Posterior cingulate gyrus (tissue), 11 donors: ENCODE measurements at regions of chr5 and their contacts with region 1.

Region 1: DNA sequence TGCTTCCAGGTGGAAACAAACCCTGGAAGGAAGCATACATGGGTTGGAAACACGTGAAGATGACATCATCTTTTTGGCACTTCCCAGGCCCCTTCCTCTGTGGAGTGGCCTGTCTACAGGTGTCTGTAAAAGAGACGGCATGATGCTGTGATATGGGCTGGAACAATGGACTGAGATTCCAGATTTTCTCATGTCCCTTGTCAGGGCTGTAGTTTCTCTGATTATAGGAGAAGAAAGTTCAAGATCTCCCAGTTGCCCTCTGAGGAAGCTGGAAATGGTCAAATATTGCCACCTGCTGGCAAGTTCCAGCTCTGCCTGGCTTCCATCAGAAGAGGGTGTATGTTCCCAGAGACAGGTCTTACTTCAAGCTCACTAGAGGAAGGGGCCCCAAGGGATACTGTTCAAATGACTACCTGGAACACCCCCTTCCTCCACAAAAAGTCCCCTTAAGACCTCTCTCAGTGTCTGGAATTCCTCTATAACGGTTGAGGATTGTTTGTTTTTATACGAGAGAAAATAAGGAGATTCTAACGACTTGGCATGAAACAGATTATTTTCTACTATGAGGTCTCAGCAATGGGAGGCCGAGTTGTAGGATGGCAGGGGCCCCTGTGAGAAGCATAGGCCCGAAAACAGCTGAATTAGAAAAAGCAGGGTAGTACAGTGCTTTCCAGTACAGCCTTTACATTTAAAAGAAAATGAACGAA is 7.3 kb upstream of the ANXA6 start:
- DNase-seq: peak; percentile 45 to 96 (median 80)

Region 2: DNA sequence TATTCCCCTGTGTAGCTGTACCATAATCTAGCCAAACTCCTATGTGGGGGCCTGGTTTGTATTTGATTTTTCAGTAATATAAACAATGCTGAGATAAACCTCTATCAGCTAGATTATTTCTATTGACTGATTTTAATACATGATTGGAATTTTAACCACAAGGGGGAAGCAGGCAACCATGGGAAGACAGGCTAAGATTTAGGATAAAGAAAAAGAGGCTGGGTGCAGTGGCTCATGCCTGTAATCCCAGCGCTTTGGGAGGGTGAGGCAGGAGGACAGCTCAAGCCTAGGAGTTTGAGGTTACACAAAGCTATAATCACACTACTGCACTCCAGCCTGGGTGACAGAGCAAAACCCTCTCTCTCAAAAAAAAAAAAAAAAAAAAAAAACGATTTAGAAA is 162.6 kb before region 1 on chr5:
- intact Hi-C with region 1: loop called (anchors 5 kb)
- DNase-seq: no peak

Region 3: DNA sequence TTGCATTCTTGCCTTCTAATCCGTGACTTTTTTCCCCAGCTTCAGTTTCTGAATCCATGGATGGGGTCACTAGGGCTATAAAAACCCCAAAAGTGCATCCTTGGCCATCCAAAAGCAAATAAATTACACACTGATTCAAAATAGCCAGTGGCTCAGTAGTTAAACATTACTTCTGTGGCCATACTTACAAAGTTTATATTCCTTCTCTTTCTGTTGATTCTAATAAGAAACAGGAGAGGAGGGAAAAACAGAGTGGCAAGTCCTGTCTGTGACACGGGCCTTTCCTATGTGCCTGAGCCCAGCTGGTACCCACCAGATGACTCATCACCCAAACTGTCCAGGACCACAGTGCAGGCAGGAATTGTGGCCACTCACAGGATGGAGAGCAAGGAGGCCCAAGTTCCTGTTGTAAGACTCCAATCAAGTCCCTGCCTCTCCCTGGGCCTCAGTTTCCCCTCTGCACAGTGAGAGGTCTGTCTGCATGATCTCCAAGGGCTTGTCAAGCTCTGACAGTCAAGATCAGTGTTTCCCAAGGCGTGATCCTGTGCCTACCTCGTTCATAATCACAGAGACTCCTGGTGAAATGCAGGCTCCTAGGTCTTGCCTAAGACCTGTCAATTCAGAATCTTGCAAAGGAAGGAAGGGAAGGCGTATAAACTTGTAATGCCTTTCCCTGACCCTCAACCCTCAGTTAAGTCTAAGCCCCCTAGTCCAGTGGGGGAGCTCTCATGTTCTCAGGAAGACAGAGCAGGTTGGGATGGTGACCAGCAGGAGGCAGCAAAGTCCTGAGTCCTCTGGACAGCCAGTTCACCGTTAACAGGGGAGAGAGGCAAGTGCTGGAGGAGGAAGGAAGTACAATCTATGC is 113.5 kb before region 1 on chr5:
- intact Hi-C with region 1: loop called (anchors 2 kb)
- DNase-seq: peak; percentile 31 to 95 (median 76)

Region 4: DNA sequence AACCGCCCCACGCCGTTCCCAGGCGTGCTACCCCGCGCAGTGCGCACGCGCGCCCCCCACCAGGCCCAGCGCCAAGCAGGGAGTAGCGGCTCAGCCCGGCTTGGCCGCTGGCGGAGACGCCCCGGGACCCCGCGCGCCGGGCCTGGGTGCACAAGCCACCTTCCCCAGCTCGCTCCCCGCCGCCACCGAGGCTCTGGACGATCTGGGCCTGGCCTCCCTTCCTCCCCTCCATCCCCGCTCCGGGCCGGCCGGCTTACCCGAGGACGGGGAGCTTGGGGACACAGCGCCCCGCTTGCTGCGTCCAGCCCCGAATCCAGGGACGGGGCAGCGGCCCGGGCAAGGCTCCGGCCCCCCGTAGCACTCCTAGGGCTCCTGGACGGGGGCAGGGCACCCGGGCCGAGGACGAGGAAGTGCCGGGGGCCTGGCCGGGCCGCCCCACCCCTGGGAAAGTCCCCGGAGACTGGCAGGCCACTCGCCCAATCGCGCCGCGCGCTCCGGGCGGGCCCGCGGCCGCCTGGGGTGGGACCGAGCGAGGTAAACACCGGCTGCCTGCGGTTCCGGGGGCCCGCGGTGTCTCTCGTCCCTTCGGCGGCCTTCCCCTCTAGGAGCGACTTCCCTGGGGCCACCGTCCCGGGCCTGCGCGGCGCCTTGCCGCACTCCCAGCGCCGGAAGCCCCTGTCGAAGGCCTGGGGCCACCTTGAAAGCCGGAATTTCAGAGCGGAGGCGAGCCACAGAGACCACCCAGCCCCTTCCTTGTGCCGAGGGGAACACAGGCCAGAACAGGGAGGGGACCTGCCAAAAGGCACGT is 84.0 kb before region 1 on chr5 and contains the start of gene TNIP1:
- intact Hi-C with region 1: no loop called
- DNase-seq: peak; percentile 85 to 99 (median 93)

Region 5: DNA sequence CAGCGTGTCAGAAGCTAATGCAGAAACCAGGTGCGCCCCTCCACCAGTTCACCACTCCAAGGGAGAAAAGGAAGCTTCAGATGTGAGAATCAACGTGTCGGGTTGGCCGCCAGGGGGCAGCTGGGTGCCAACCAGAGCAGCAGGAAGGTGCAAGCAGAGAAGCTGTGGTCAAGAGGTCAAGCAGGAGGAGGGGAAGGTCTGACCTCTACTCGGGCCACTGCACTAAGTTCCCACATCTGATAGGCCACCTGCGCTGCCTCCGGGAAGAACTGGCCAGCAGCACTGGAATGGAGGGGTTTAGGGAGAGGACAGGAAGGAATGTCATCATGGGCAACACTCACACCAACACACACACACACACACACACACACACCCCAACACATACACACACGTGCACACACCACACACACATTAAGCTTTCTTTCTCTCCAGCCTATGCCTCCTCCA is 38.6 kb before region 1 on chr5:
- intact Hi-C with region 1: loop called (anchors 1 kb)
- DNase-seq: peak in 9 of 10 donors; percentile 60 to 96 (median 76)